Lower leg skin (tissue), 4 donors: ENCODE measurements at regions of chr3 and their contacts with region 1.

Region 1: GRCh38 chr3:39707314-39707909 is 102.0 kb upstream of the MYRIP start:
- DNase-seq: no peak
- H3K4me3 ChIP-seq: no peak overlapping the region
- CTCF ChIP-seq: no peak
- POLR2A ChIP-seq: no peak

Region 2: GRCh38 chr3:39754549-39754948 is 47.1 kb after region 1 on chr3:
- intact Hi-C with region 1: no loop called
- DNase-seq: no peak
- H3K4me3 ChIP-seq: no peak overlapping the region
- CTCF ChIP-seq: no peak
- POLR2A ChIP-seq: no peak

Region 3: DNA sequence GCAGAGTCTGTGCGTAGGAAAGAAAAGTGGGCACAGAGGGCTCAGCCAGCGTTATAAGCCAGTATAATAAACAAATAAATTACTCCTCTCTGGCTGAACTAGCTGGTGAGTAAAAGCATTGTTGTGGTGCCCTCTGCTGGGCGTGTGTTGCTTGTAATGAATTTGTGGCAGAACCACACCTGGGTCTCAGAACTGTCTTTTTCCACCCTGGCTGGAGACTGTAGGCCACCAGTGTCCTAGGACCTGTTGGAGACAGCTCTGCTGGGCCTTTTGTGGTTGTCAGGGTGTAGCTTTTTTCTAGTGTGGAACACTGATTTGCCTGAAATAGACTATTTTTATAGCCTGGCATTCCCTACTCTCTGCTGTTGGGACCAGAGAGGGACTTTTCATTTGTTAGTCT is 471.6 kb after region 1 on chr3:
- intact Hi-C with region 1: loop called (anchors 5 kb)
- DNase-seq: peak; percentile 57 to 92
- H3K4me3 ChIP-seq: no peak overlapping the region
- CTCF ChIP-seq: no peak
- POLR2A ChIP-seq: no peak

Region 4: GRCh38 chr3:41088882-41089281 is 1381.5 kb after region 1 on chr3:
- intact Hi-C with region 1: no loop called
- DNase-seq: no peak
- H3K4me3 ChIP-seq: no peak overlapping the region
- CTCF ChIP-seq: no peak
- POLR2A ChIP-seq: no peak